Activated T-helper 2 cell treated with anti-CD3 and anti-CD28 coated beads, Interferon-gamma antibody, Interleukin-2, Interleukin-4, amounts not matched to agents 10 μg/mL and 5 μg/mL and 100 μg/mL, durations not matched to agents 14 hours and 24 hours and 36 hours (primary cell): ENCODE measurements at regions of chr4 and their contacts with region 1.

Region 1: GRCh38 chr4:102849579-102850104 is 19.1 kb upstream of the CISD2 start:
- DNase-seq: no peak
- H3K4me3 Mint-ChIP-seq: no peak overlapping the region
- H3K27ac Mint-ChIP-seq: no peak overlapping the region
- H3K4me1 Mint-ChIP-seq: peaks cover 7% of the 10 kb centered on the region
- H3K27me3 Mint-ChIP-seq: no peaks in the 10 kb centered on the region

Region 2: DNA sequence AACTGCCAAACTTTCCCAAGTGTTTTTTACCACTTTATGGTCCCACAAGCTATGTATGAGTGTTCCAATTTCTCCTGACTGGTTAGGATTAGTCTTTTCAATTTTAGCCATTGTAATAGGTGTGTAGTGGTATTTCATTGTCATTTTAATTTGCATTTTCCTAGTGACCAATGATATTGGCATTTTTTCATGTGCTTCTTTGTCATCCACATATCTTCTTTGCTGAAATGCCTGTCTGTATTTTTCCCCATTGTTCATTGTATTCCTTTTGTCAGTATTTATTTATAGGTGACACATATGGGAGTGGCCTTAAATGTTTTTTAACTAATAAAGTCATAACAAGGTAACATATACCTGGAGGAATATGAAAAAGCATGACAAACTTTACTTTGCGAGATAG is 13.0 kb before region 1 on chr4:
- intact Hi-C with region 1: loop called (anchors 2 kb)
- DNase-seq: no peak
- H3K4me3 Mint-ChIP-seq: no peak overlapping the region
- H3K27ac Mint-ChIP-seq: no peak overlapping the region
- H3K4me1 Mint-ChIP-seq: peaks cover 30% of the 10 kb centered on the region
- H3K27me3 Mint-ChIP-seq: no peaks in the 10 kb centered on the region

Region 3: GRCh38 chr4:102988429-102989020 is 138.9 kb after region 1 on chr4:
- intact Hi-C with region 1: no loop called
- DNase-seq: no peak
- H3K4me3 Mint-ChIP-seq: peak overlapping the region; percentile 22
- H3K27ac Mint-ChIP-seq: peak overlapping the region; percentile 85
- H3K4me1 Mint-ChIP-seq: peaks cover 42% of the 10 kb centered on the region
- H3K27me3 Mint-ChIP-seq: no peaks in the 10 kb centered on the region